Heart right ventricle (tissue), 16 donors: ENCODE measurements at regions of chr11 and their contacts with region 1.

Region 1: GRCh38 chr11:35617687-35618496 is at the start of gene FJX1:
- DNase-seq: peak; percentile 57 to 61
- ATAC-seq: peak; percentile 70 to 82 (median 78)
- H3K4me3 ChIP-seq: peak within 1 kb of the TSS; percentile 51 to 79 (median 62)
- H3K27ac ChIP-seq: peak within 1 kb of the TSS; percentile 53 to 92 (median 83)
- H3K4me1 ChIP-seq: peaks cover 4 to 53% (median 25%) of the 10 kb centered on the region in 9 donors
- H3K27me3 ChIP-seq: peaks cover 0 to 94% (median 19%) of the 10 kb centered on the region in 7 donors
- CTCF ChIP-seq: no peak
- total RNA-seq, gene FJX1: 0.57 to 4.7 (median 1.3) TPM

Region 2: DNA sequence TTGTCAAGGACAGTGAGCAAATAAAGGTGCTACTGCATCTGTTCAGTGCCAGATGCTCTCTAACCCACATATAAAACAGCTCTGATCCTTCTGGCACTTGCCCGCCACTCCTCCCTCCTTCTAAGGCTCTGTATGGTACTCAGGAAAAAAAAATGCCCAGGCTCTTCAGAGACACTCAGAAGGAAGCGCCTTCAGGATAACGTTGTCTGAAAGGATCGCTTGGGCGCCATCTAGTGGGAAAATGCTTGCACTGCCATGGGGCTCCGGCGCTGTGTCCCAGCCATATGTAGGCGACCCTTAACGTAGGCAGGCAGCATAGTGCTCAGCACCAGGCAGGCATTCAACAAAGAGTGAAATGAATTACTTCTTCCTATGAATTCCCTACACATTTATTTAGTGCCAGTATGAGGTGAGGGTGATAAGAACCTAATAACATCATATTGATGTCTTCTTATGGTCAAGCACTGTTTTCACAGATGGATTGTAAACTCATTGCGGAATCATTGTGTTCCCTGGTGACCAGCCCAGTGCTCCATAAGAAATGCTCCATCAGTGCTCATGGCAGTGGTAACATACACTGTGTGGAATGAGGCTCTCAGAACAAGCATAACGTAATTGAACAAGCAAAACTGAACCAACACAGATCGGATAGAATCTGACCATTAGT is 132.1 kb before region 1 on chr11:
- intact Hi-C with region 1: loop called in 1 of 10 experiments (anchors 5 kb)
- DNase-seq: peak; percentile 65 to 68
- ATAC-seq: peak; percentile 75 to 90 (median 88)
- H3K4me3 ChIP-seq: no peak overlapping the region
- H3K27ac ChIP-seq: no peak overlapping the region
- H3K4me1 ChIP-seq: peaks cover 0 to 12% (median 0%) of the 10 kb centered on the region in 9 donors
- H3K27me3 ChIP-seq: peaks cover 0 to 15% (median 8%) of the 10 kb centered on the region in 7 donors
- CTCF ChIP-seq: peak; percentile 76 to 94 (median 90)

Region 3: DNA sequence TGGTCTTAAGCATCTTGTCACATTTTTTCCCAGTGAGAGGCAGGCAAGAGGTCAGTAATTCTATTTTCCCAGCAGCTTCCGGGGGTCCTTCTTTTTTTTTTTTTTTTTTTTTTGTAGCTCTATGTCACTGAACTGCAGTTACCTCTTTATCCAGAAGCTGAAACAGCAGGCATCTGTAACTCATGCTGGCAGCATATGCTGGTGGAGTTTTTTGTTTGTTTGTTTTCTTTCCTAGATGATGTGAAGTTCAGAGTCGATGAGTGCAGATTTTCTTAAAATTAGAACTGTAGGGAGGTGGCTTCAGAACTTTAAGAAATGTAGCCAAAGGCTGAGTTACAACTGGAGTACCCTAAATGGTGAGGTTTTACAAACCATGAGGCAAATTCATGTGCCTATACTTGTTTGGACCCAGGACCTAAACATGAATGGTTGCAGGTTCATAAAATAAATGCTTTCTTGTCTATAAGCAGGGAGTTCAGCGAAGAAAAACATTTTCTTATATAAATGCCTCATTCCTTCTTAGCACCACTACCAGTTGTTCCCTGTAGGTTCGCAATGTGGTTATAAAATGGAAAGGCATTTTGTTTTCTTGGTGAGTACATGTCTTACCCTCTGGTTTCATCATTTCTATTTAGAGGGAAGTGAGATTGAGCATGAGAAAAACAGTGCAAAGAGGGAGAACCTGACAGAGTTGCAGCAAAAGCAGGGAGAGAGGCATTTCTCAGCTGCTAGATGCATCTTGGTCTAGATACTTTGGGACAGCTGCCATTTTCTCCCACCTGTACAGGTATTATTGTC is 128.7 kb after region 1 on chr11:
- intact Hi-C with region 1: no loop called
- DNase-seq: no peak
- ATAC-seq: no peak
- H3K4me3 ChIP-seq: no peak overlapping the region
- H3K27ac ChIP-seq: no peak overlapping the region
- H3K4me1 ChIP-seq: peaks cover 0 to 15% (median 2%) of the 10 kb centered on the region in 9 donors
- H3K27me3 ChIP-seq: no peaks in the 10 kb centered on the region
- CTCF ChIP-seq: no peak

Region 4: GRCh38 chr11:35822815-35823495 is 205.1 kb after region 1 on chr11:
- intact Hi-C with region 1: loop called (anchors 2 to 10 kb)
- DNase-seq: no peak
- ATAC-seq: no peak
- H3K4me3 ChIP-seq: no peak overlapping the region
- H3K27ac ChIP-seq: no peak overlapping the region
- H3K4me1 ChIP-seq: peaks cover 0 to 34% (median 25%) of the 10 kb centered on the region in 9 donors
- H3K27me3 ChIP-seq: no peaks in the 10 kb centered on the region
- CTCF ChIP-seq: no peak

Region 5: DNA sequence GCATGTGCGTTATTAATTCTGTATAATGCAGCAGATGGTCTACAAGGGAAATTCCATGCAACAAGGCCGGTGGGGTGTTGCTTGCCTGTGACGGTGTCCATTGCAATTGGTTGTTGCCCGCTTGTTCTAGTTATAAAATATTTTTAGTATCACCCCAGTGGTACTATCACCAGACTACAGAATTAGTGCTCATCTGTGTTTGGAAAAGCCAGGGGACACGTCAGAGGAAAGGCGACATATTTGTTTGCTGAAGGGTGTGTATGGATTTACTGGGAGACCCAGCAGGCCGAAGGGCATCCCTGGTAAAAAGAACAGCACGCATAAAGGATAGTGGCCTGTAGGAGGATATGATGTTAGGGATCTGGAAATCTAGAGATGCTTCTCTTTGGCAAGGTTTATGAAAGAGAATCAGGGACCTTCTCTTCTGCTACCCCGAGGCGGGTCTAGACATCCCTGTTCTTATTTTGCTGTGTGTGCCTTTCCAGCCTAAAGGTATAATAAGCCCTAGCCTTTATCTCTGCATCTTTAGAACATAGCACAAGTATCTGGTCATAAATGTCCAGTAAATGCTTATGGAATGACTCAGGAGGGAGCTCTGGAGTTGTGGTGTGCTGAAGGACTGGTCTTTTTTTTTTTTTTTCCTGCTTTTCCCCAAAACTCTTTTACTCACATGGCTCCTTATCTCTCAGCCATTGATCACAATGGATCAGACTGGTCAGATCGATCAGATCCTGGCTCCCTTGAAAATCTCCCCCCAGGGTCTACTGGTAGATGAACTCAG is 416.8 kb after region 1 on chr11:
- intact Hi-C with region 1: loop called in 2 of 10 experiments (anchors 10 kb)
- DNase-seq: no peak
- ATAC-seq: no peak
- H3K4me3 ChIP-seq: no peak overlapping the region
- H3K27ac ChIP-seq: no peak overlapping the region
- H3K4me1 ChIP-seq: peaks cover 0 to 28% (median 0%) of the 10 kb centered on the region in 9 donors
- H3K27me3 ChIP-seq: peaks cover 0 to 3% (median 0%) of the 10 kb centered on the region in 7 donors
- CTCF ChIP-seq: no peak

Region 6: GRCh38 chr11:36131721-36132397 is 514.0 kb after region 1 on chr11:
- intact Hi-C with region 1: loop called (anchors 2 to 5 kb)
- DNase-seq: peak; percentile 24 to 68
- ATAC-seq: peak; percentile 77 to 92 (median 83)
- H3K4me3 ChIP-seq: no peak overlapping the region
- H3K27ac ChIP-seq: peak overlapping the region in 2 of 10 donors; percentile 15 to 44
- H3K4me1 ChIP-seq: peaks cover 0 to 15% (median 0%) of the 10 kb centered on the region in 9 donors
- H3K27me3 ChIP-seq: peaks cover 0 to 22% (median 6%) of the 10 kb centered on the region in 7 donors
- CTCF ChIP-seq: peak; percentile 47 to 87 (median 75)

Region 7: GRCh38 chr11:36265793-36266628 is 648.1 kb after region 1 on chr11:
- intact Hi-C with region 1: loop called in 8 of 10 experiments (anchors 1 to 5 kb)
- DNase-seq: peak; percentile 20 to 56
- ATAC-seq: peak; percentile 53 to 78 (median 66)
- H3K4me3 ChIP-seq: no peak overlapping the region
- H3K27ac ChIP-seq: no peak overlapping the region
- H3K4me1 ChIP-seq: peaks cover 0 to 6% (median 0%) of the 10 kb centered on the region in 9 donors
- H3K27me3 ChIP-seq: peaks cover 0 to 24% (median 0%) of the 10 kb centered on the region in 7 donors
- CTCF ChIP-seq: peak; percentile 48 to 88 (median 77)

Region 8: GRCh38 chr11:36492724-36493304 is 874.9 kb after region 1 on chr11:
- intact Hi-C with region 1: loop called in 1 of 10 experiments (anchors 10 kb)
- DNase-seq: peak in 1 of 2 donors; percentile 27
- ATAC-seq: peak in 2 of 8 donors; percentile 58 to 63
- H3K4me3 ChIP-seq: no peak overlapping the region
- H3K27ac ChIP-seq: no peak overlapping the region
- H3K4me1 ChIP-seq: peaks cover 0 to 29% (median 7%) of the 10 kb centered on the region in 9 donors
- H3K27me3 ChIP-seq: no peaks in the 10 kb centered on the region
- CTCF ChIP-seq: peak; percentile 62 to 91 (median 81)